Activated CD4-positive, alpha-beta T cell treated with anti-CD3 and anti-CD28 coated beads, Interleukin-2, amount 10 ng/mL, durations not matched to agents 24 days and 14 days (primary cell): ENCODE measurements at regions of chr9 and their contacts with region 1.

Region 1: GRCh38 chr9:15295761-15296405 is 11.1 kb downstream of the TTC39B start:
- DNase-seq: peak; percentile 81
- H3K4me3 Mint-ChIP-seq: peak overlapping the region; percentile 72
- H3K27ac Mint-ChIP-seq: peak overlapping the region; percentile 97
- H3K4me1 Mint-ChIP-seq: peaks cover 82% of the 10 kb centered on the region
- H3K27me3 Mint-ChIP-seq: no peaks in the 10 kb centered on the region

Region 2: DNA sequence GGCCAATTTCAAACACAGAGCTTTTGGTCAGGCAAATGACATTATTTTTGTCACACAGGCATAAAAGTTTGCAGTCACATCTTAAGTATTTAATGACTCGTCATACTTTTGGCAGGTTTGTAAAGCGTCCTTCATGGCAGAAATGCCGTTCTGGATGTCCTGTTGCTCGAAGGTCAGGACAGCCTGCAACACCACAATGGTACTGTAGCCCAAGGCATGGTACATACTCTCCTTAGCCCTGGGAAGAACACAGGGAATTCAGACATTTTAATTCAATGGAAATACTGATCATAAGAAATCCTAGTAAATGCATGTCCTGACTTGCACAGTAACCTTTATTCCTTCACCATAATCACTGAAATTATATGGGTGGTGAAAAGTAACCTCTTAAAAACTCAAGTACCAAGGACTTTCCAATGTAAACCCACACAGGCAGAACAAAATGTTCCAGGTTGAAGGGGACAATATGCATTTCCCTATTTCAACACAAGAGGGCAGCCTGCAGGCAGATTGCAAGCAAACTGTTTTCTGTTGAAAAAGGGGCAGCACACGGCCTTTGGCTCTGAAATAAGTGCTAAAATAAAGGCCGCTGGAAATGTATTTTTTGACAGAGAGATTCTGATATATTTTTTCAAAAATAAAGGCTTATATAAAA is 84.6 kb before region 1 on chr9:
- intact Hi-C with region 1: loop called (anchors 2 kb)
- DNase-seq: peak; percentile 90
- H3K4me3 Mint-ChIP-seq: no peak overlapping the region
- H3K27ac Mint-ChIP-seq: peak overlapping the region; percentile 20
- H3K4me1 Mint-ChIP-seq: peaks cover 19% of the 10 kb centered on the region
- H3K27me3 Mint-ChIP-seq: no peaks in the 10 kb centered on the region

Region 3: GRCh38 chr9:15277400-15278090 is 18.3 kb before region 1 on chr9:
- intact Hi-C with region 1: loop called (anchors 2 kb)
- DNase-seq: no peak
- H3K4me3 Mint-ChIP-seq: no peak overlapping the region
- H3K27ac Mint-ChIP-seq: no peak overlapping the region
- H3K4me1 Mint-ChIP-seq: peaks cover 24% of the 10 kb centered on the region
- H3K27me3 Mint-ChIP-seq: no peaks in the 10 kb centered on the region

Region 4: GRCh38 chr9:15349892-15350778 is 54.3 kb after region 1 on chr9:
- intact Hi-C with region 1: loop called (anchors 5 kb)
- DNase-seq: no peak
- H3K4me3 Mint-ChIP-seq: no peak overlapping the region
- H3K27ac Mint-ChIP-seq: no peak overlapping the region
- H3K4me1 Mint-ChIP-seq: peaks cover 10% of the 10 kb centered on the region
- H3K27me3 Mint-ChIP-seq: no peaks in the 10 kb centered on the region

Region 5: DNA sequence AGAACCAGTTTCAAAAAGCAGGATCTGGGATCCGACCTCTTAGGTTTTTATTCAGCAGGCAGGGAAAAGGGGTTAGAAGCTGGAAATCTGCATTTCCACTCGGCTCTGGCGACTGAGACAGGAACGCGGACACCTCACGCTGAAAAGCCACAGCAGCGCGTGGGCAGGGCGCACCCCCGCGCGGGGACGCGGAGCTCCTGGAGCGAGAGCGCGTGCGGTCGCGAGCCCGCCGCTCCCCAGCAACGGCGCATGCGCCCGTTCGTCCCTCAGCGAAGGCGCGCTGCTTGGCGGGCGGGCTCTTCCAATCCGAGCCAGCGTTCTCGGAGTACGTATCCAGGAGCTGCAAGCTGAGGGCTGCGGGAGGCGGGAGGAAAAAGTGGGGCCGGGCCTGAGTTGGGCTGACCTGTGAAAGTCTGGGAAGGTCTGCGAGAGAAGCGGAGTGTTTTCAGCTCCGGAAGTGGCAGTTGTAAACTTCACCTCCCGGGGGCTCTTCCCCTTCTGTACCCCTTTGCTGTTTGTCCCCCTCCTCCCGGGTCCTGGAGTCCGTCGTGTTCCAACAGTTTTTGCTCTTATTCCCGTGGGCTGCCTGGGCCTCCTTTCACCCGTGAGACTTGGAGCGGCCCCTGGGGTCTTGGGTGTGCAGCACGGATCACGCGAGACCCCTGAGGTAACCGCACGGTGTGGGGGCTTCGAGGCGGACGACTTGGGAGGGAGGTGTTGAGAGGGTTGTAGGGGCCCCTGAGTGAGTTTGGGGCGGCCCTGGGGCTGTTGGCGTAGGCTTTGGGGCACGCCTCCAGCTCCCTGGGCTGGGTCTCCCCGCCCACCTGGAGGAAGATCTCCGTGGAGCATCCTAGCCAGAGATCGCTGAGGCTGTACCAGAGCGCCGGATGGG is 257.0 kb after region 1 on chr9 and contains the start of gene CCDC171:
- intact Hi-C with region 1: loop called (anchors 5 kb)
- DNase-seq: peak; percentile 96
- H3K4me3 Mint-ChIP-seq: peak within 1 kb of the TSS; percentile 89
- H3K27ac Mint-ChIP-seq: peak within 1 kb of the TSS; percentile 81
- H3K4me1 Mint-ChIP-seq: peaks cover 13% of the 10 kb centered on the region
- H3K27me3 Mint-ChIP-seq: peaks cover 17% of the 10 kb centered on the region
- total RNA-seq, gene CCDC171: 1.5 and 1.6 TPM in 2 replicates